GM23248 (cell line): ENCODE measurements at regions of chr7 and their contacts with region 1.

Region 1: GRCh38 chr7:97027427-97028234 is 3.0 kb upstream of the DLX5 start:
- DNase-seq: peak; percentile 90
- H3K4me3 ChIP-seq: peak overlapping the region; percentile 71
- H3K27ac ChIP-seq: no peak overlapping the region
- H3K4me1 ChIP-seq: no peaks in the 10 kb centered on the region
- H3K27me3 ChIP-seq: peaks cover 64% of the 10 kb centered on the region

Region 2: DNA sequence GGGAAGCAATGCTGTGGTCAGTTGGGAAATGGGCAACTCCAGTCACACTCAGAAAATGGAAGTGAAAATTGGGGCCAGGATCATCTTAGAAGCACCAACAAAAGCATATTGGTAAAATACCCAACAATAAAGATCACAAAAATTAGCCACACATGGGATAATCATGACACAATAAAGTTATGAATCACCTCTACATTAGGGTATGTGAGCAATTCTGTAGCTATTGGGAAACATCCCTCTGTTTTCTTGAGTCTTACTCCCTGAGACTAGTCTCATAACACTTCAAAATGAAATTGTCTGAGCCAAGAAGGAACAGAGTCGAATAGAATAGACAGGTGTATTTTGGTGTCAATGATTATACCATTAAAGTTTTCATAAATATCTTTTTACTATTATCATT is 1076.9 kb before region 1 on chr7:
- in situ Hi-C with region 1: no loop called
- DNase-seq: peak; percentile 70
- H3K4me3 ChIP-seq: no peak overlapping the region
- H3K27ac ChIP-seq: no peak overlapping the region
- H3K4me1 ChIP-seq: no peaks in the 10 kb centered on the region
- H3K27me3 ChIP-seq: no peaks in the 10 kb centered on the region

Region 3: GRCh38 chr7:96075510-96076349 is 951.9 kb before region 1 on chr7:
- in situ Hi-C with region 1: loop called (anchors 10 kb)
- DNase-seq: peak; percentile 83
- H3K4me3 ChIP-seq: peak overlapping the region; percentile 76
- H3K27ac ChIP-seq: no peak overlapping the region
- H3K4me1 ChIP-seq: 0 out of 2 replicates have a peak, but pooled peaks cover 5% of the 10 kb centered on the region
- H3K27me3 ChIP-seq: peaks cover 16% of the 10 kb centered on the region